ENCODE measurements at regions of chr22 and their contacts with region 1.

Region 1: DNA sequence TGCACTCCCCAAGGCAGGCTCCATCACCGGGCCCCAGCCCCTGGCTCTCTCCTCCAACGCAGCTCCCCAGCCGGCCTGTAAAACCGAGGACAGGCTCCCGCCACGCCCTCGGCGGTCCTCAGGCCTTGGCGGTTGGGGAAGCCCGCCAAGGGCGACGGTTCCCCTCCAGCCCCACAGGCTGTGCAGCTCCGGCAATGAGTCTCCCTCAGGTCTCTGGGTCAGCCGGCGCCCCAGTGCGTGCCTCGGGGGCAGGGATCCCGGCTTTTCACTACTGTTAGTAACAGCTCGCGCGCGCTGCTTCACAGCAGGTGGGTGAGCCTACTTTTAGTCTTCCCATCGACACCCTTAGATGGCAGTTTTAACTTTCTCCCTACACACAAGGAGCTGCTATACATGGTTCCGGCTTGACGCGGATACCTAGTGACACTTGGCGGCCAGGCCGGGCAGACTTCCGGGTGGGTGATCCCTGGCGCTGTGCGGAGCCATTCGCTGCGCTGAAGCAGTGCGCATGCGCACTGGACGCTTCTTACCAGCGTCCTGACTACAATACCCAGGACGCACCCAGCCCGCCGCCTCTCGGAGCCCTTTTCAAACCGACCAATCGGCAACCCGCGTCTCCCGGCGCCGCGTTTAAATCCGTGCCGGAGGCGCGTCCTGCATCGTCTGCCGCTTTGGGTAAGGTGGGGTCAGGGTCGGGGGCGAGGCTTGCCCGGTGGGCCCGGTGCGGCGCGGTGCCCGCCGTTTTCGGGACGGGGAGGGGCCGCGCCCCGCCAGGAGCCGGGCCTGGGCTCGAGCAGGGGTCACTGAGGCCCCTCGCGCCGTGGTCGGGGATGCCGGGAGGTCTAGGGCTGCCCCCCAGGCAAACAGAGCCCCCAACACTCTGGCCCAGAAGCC is at the start of gene GTSE1:
- DNase-seq: peak; percentile 95 to 97
- H3K4me3 ChIP-seq: peak within 1 kb of the TSS; percentile 69
- H3K4me3 Mint-ChIP-seq: peak within 1 kb of the TSS; percentile 84
- H3K27ac Mint-ChIP-seq: peak within 1 kb of the TSS; percentile 87
- H3K4me1 ChIP-seq: peaks cover 8% of the 10 kb centered on the region; the same call in 1 of the 2 replicates
- H3K4me1 Mint-ChIP-seq: peaks cover 30% of the 10 kb centered on the region
- H3K27me3 ChIP-seq: no peaks in the 10 kb centered on the region
- H3K27me3 Mint-ChIP-seq: no peaks in the 10 kb centered on the region
- CTCF ChIP-seq: peak in 1 of 2 experiments; percentile 25
- total RNA-seq, gene GTSE1: 54.4 and 55.1 TPM in 2 replicates

Region 2: DNA sequence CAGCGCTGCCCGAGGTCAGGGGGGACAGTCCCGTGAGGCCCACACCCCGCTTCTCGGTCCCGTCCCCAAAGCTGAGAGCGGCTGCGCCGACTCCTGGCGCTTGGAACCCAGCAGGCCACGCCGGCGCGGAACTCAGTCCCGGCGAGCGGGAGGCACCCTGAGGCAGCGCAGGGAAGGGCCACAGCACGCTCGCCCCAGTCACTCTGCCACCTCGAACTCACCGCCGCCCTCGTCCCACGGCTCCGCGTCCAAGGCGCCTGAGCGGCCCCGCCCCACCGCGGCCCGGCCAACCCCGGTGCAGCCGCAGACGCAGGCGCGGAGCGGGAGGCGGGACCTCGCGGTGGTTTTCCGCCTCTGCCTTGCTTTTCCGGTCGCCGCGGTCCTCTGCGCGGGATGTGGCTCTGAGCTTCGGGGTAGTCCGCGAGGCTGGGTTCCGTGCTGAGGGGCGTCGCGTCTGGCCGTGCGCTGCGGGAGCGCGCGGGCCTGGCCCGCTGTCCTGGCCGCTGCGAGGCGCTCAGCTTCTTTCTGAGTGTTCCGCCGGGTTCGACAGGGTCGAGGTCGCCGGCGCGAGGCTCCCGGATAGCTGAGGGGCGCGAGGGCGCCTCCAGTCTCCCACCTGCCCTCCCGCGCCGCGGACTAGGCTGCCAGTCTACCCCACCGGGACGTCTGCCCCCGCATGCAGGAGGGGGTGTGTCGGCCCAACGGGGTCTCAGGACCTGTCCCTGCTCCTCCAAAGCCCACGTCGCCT is 46.3 kb before region 1 on chr22 and contains the start of gene CDPF1:
- CTCF ChIA-PET with region 1: interaction called, 3 read pairs
- POLR2A ChIA-PET with region 1: interaction called, 4 read pairs
- intact Hi-C with region 1: loop called (anchors 1 kb)
- DNase-seq: peak; percentile 88 to 95
- H3K4me3 ChIP-seq: peak within 1 kb of the TSS; percentile 78
- H3K4me3 Mint-ChIP-seq: peak within 1 kb of the TSS; percentile 93
- H3K27ac Mint-ChIP-seq: peak within 1 kb of the TSS; percentile 90
- H3K4me1 ChIP-seq: peaks cover 12% of the 10 kb centered on the region
- H3K4me1 Mint-ChIP-seq: peaks cover 7% of the 10 kb centered on the region
- H3K27me3 ChIP-seq: no peaks in the 10 kb centered on the region
- H3K27me3 Mint-ChIP-seq: no peaks in the 10 kb centered on the region
- CTCF ChIP-seq: no peak
- total RNA-seq, gene CDPF1: 7.2 and 8.8 TPM in 2 replicates

Region 3: GRCh38 chr22:46267431-46268279 is 28.8 kb before region 1 on chr22 and contains the start of gene TTC38:
- CTCF ChIA-PET with region 1: interaction called, 6 read pairs
- POLR2A ChIA-PET with region 1: interaction called, 5 read pairs
- intact Hi-C with region 1: loop called (anchors 1 kb)
- DNase-seq: peak; percentile 89 to 90
- H3K4me3 ChIP-seq: peak within 1 kb of the TSS; percentile 80
- H3K4me3 Mint-ChIP-seq: peak within 1 kb of the TSS; percentile 90
- H3K27ac Mint-ChIP-seq: peak within 1 kb of the TSS; percentile 75
- H3K4me1 ChIP-seq: peaks cover 16% of the 10 kb centered on the region
- H3K4me1 Mint-ChIP-seq: no peaks in the 10 kb centered on the region
- H3K27me3 ChIP-seq: no peaks in the 10 kb centered on the region
- H3K27me3 Mint-ChIP-seq: no peaks in the 10 kb centered on the region
- CTCF ChIP-seq: no peak
- total RNA-seq, gene TTC38: 44.5 and 48.9 TPM in 2 replicates

Measured in Caco-2 (cell line).